ENCODE measurements at regions of chr6 and their contacts with region 1.

Region 1: GRCh38 chr6:139250296-139251044 is 41.3 kb downstream of the TXLNB start:
- DNase-seq: peak; percentile 78
- H3K4me3 Mint-ChIP-seq: peak overlapping the region; percentile 70
- H3K27ac Mint-ChIP-seq: peak overlapping the region; percentile 93
- H3K4me1 Mint-ChIP-seq: peaks cover 44% of the 10 kb centered on the region
- H3K27me3 Mint-ChIP-seq: no peaks in the 10 kb centered on the region

Region 2: GRCh38 chr6:138716013-138716412 is 534.5 kb before region 1 on chr6:
- CTCF ChIA-PET with region 1: no interaction called
- POLR2A ChIA-PET with region 1: no interaction called
- DNase-seq: no peak
- H3K4me3 Mint-ChIP-seq: no peak overlapping the region
- H3K27ac Mint-ChIP-seq: no peak overlapping the region
- H3K4me1 Mint-ChIP-seq: no peaks in the 10 kb centered on the region
- H3K27me3 Mint-ChIP-seq: peaks cover 12% of the 10 kb centered on the region

Region 3: DNA sequence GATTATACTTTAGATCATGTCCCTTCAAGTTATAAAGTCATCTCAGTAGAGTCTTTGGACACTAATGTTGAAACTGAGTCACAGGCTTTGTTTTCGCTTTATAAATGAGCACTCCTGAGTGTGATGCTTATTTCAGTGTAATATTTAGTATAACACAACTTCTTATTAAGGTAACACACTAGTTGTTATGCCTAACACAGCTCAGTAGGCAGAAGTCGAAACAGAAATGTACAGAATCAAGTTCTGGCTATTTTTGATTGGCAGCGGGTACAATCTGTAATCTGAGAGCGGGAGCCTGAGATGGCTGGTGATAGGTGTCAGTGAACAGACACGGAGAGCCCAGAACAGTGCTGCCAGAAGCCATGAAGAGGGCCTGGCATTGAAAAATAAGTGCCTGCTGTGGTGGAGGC is 104.1 kb before region 1 on chr6:
- CTCF ChIA-PET with region 1: interaction called, 15 read pairs
- POLR2A ChIA-PET with region 1: interaction called, 3 read pairs
- DNase-seq: no peak
- H3K4me3 Mint-ChIP-seq: peak overlapping the region; percentile 49
- H3K27ac Mint-ChIP-seq: peak overlapping the region; percentile 88
- H3K4me1 Mint-ChIP-seq: peaks cover 93% of the 10 kb centered on the region
- H3K27me3 Mint-ChIP-seq: no peaks in the 10 kb centered on the region

Region 4: DNA sequence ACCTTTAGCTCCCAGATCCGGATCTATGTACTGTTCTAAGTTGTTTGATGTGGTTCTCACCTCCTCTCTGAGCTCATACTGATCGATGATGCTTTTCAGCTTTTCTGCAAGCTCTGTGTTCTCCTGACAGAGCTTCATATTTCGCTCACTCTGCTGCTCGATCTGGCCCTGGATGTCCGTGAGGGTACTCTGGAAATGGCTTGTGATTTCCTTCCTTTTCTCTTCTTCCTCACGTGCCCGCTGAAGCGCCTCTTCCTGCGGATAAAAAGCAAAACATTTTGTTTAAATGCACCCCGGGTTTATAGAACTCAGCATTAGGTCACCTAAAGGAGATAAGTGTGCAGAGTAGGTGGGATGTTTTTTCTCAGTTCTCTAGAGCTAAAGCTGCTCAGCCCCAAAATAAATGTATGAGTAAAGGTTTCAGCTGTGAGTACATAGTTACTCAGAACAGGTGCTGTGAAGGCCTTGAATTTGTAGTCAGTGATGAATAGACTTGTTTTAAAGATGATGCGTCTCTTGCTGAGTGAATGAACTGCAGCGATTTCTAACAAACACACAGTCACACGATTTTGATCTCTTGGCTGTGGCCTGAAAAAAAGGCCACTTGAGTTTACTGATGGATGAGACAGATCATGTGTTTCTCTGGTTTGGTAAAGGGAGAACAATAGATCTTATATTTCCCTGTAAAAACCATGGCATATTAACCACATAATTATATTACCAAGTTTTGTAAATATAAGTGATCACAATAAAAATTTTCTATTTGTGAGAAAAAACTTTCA is 12.2 kb after region 1 on chr6:
- CTCF ChIA-PET with region 1: interaction called, 6 read pairs
- POLR2A ChIA-PET with region 1: interaction called, 16 read pairs
- DNase-seq: peak; percentile 32
- H3K4me3 Mint-ChIP-seq: peak overlapping the region; percentile 46
- H3K27ac Mint-ChIP-seq: peak overlapping the region; percentile 74
- H3K4me1 Mint-ChIP-seq: peaks cover 26% of the 10 kb centered on the region
- H3K27me3 Mint-ChIP-seq: no peaks in the 10 kb centered on the region

Region 5: GRCh38 chr6:139323511-139324300 is 73.2 kb after region 1 on chr6:
- CTCF ChIA-PET with region 1: interaction called, 7 read pairs
- POLR2A ChIA-PET with region 1: interaction called, 16 read pairs
- DNase-seq: peak; percentile 81
- H3K4me3 Mint-ChIP-seq: peak overlapping the region; percentile 70
- H3K27ac Mint-ChIP-seq: peak overlapping the region; percentile 96
- H3K4me1 Mint-ChIP-seq: peaks cover 31% of the 10 kb centered on the region
- H3K27me3 Mint-ChIP-seq: no peaks in the 10 kb centered on the region